CD4-positive, alpha-beta T cell (primary cell): ENCODE measurements at regions of chr6 and their contacts with region 1.

Region 1: DNA sequence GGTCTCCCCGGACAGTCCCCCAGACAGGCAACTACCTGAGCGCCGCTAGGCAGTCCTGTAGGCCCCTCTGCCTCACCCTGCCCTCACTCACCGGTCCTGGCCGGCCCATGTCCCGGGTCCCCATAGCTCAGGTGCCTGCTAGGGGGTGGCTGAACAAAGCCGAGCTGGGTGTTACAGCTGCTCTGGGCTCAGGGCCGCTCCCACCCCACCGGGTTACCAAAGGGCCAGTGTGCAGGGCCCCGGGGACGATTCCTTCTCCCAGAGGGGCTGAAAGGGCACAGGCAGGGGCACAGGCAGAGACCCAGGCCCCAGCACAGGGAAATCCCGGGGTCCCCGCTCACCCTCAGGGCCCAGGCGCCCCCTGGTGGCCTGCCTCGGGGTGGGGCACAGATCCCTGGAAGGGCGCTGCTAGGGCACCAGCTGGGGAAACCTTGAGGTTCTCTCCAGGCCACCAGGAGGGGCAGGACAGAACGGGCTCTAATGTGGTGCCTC is 118.4 kb downstream of the GRM4 start:
- DNase-seq: peak; percentile 46 to 77 (median 62)
- ATAC-seq: peak; percentile 76
- H3K4me3 ChIP-seq: no peak overlapping the region
- H3K4me3 Mint-ChIP-seq: no peak overlapping the region
- H3K27ac ChIP-seq: no peak overlapping the region
- H3K27ac Mint-ChIP-seq: no peak overlapping the region
- H3K4me1 ChIP-seq: peaks cover 4% of the 10 kb centered on the region
- H3K4me1 Mint-ChIP-seq: no peaks in the 10 kb centered on the region
- H3K27me3 ChIP-seq: no peaks in the 10 kb centered on the region
- H3K27me3 Mint-ChIP-seq: no peaks in the 10 kb centered on the region
- CTCF ChIP-seq: peak; percentile 84

Region 2: GRCh38 chr6:33700391-33701050 is 327.0 kb before region 1 on chr6:
- CTCF ChIA-PET with region 1: no interaction called
- POLR2A ChIA-PET with region 1: no interaction called
- intact Hi-C with region 1: no loop called
- DNase-seq: peak; percentile 60 to 88 (median 72)
- ATAC-seq: peak; percentile 58
- H3K4me3 ChIP-seq: no peak overlapping the region
- H3K4me3 Mint-ChIP-seq: no peak overlapping the region
- H3K27ac ChIP-seq: no peak overlapping the region
- H3K27ac Mint-ChIP-seq: peak overlapping the region; percentile 84
- H3K4me1 ChIP-seq: peaks cover 42% of the 10 kb centered on the region
- H3K4me1 Mint-ChIP-seq: peaks cover 50% of the 10 kb centered on the region
- H3K27me3 ChIP-seq: no peaks in the 10 kb centered on the region
- H3K27me3 Mint-ChIP-seq: no peaks in the 10 kb centered on the region
- CTCF ChIP-seq: peak; percentile 73

Region 3: DNA sequence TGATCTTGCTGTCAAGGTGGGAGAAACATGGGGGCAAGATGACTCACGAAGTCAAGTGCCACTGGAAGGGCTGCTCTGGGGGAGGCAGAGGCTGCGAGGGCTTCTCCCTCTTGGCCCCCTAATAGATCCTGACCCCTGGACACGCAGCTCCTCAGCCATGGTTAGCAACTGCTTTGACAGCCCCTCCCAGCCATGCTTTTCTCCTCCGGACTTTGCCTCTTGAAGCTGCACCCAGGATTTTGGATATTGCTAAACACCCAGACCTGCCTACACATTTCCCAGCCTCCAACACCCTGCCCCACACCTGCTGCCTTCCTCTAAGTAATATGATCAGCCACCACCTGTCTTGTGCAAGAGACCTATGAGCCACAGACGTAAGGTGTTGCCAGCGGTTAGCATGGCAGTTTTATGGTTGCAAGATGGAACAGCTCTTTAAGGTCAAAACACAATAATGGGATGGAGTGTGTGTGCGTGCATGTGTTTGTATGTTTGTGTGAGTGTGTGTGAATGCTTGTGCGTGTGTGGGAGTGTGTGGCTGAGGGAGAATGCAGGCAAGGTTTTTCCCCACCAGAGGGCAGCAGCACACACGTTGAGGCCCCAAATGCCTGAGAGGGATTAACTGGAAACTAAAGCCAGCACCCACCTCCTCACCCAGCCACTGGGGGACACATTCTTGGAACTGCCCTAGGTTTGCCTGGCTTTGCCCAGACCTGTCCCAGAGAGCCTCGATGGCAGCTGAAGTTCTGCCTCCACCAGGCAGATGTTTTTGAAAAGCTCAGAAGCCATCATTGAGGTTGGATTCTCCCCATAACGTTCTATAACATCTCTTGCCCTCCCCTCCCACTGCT is 283.3 kb before region 1 on chr6:
- CTCF ChIA-PET with region 1: interaction called, 3 read pairs
- POLR2A ChIA-PET with region 1: no interaction called
- intact Hi-C with region 1: loop called (anchors 1 kb)
- DNase-seq: peak; percentile 51 to 85 (median 65)
- ATAC-seq: peak; percentile 94
- H3K4me3 ChIP-seq: no peak overlapping the region
- H3K4me3 Mint-ChIP-seq: no peak overlapping the region
- H3K27ac ChIP-seq: no peak overlapping the region
- H3K27ac Mint-ChIP-seq: no peak overlapping the region
- H3K4me1 ChIP-seq: peaks cover 5% of the 10 kb centered on the region
- H3K4me1 Mint-ChIP-seq: peaks cover 5% of the 10 kb centered on the region
- H3K27me3 ChIP-seq: peaks cover 4% of the 10 kb centered on the region in 2 experiments
- H3K27me3 Mint-ChIP-seq: peaks cover 12% of the 10 kb centered on the region
- CTCF ChIP-seq: peak; percentile 86

Region 4: DNA sequence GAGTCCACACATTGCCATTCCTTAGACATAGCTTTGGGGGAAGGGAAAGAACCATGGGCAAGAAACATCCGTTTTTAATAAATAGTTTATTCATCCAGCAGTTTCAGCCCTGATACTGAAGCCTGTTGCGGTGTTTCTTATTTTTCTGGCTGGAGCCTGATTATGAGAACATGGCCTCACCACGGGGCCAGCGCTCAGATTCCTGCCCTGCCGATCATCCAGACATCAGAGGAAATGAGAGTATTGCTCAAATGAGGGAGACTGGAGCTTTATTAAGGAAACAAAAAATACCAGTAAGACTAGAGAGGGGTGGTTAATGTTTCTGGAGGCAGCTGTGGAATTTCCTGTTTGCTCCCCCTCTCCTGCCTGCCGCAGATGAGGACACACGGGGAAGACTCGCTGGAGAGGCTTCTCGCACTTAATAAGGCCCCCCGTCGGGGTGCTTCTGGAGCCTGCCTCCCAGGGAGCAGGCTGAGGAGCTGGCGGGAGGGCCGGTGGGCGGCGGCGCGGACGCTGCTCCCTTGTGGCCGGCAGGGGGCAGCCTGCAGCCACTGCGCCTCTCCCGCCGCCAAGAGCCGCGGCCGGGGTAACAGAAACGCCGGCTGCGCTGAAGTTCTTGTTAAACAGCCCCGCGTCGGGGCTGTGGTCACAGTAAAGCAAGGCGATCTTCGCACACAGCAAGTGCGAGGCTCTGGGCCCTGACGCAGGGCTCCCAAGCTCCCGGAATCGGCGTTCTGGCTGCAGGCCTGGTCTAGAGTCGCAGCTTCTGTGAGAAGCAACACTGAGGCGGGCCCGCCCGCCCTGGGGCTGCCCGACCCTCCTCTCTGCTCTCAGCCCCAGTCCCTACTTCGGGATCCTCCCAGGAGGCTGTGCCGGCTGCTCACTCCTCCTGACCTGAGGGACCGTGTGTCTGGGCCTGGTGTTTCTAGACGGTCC is 256.1 kb before region 1 on chr6:
- CTCF ChIA-PET with region 1: interaction called, 39 read pairs
- POLR2A ChIA-PET with region 1: interaction called, 10 read pairs
- intact Hi-C with region 1: loop called (anchors 1 kb)
- DNase-seq: peak; percentile 36 to 85 (median 57)
- ATAC-seq: peak; percentile 80
- H3K4me3 ChIP-seq: no peak overlapping the region
- H3K4me3 Mint-ChIP-seq: no peak overlapping the region
- H3K27ac ChIP-seq: no peak overlapping the region
- H3K27ac Mint-ChIP-seq: peak overlapping the region; percentile 61
- H3K4me1 ChIP-seq: peaks cover 21% of the 10 kb centered on the region
- H3K4me1 Mint-ChIP-seq: peaks cover 17% of the 10 kb centered on the region
- H3K27me3 ChIP-seq: peaks cover 0 to 3% of the 10 kb centered on the region in 2 experiments
- H3K27me3 Mint-ChIP-seq: no peaks in the 10 kb centered on the region
- CTCF ChIP-seq: peak; percentile 94

Region 5: DNA sequence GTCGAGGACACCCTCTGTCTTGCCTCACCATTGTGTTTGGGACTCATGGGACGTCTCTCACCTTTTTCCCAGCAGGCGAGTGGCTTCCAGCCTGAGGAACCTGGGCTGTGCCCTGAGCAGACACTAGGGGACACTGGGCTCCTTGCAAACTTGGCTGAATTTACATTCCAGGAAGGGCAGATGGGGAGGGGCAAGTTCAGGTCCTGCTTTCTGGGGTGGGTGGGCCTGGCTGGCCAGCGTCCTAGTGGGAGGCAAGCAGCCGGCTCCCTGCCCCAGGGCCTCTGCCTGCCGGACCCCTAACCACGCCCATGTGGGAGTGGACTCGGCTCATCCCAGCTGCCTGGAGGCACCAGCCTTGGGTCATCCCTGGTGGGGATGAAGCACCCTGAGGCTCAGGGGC is 175.5 kb before region 1 on chr6:
- CTCF ChIA-PET with region 1: interaction called, 3 read pairs
- POLR2A ChIA-PET with region 1: no interaction called
- intact Hi-C with region 1: loop called (anchors 1 kb)
- DNase-seq: peak in 7 of 14 experiments; percentile 7 to 60 (median 31)
- ATAC-seq: no peak
- H3K4me3 ChIP-seq: no peak overlapping the region
- H3K4me3 Mint-ChIP-seq: no peak overlapping the region
- H3K27ac ChIP-seq: no peak overlapping the region
- H3K27ac Mint-ChIP-seq: no peak overlapping the region
- H3K4me1 ChIP-seq: peaks cover 27% of the 10 kb centered on the region
- H3K4me1 Mint-ChIP-seq: peaks cover 15% of the 10 kb centered on the region
- H3K27me3 ChIP-seq: peaks cover 5 to 8% of the 10 kb centered on the region in 2 experiments
- H3K27me3 Mint-ChIP-seq: peaks cover 4% of the 10 kb centered on the region
- CTCF ChIP-seq: peak; percentile 25